Calu3 (cell line): ENCODE measurements at regions of chr21 and their contacts with region 1.

Region 1: GRCh38 chr21:33894736-33895288 is 20.8 kb downstream of the ATP5PO start:
- DNase-seq: peak; percentile 71
- H3K4me3 Mint-ChIP-seq: peak overlapping the region; percentile 62
- H3K27ac Mint-ChIP-seq: peak overlapping the region; percentile 60
- H3K4me1 Mint-ChIP-seq: peaks cover 13% of the 10 kb centered on the region
- H3K27me3 Mint-ChIP-seq: no peaks in the 10 kb centered on the region
- CTCF ChIP-seq: peak; percentile 22

Region 2: DNA sequence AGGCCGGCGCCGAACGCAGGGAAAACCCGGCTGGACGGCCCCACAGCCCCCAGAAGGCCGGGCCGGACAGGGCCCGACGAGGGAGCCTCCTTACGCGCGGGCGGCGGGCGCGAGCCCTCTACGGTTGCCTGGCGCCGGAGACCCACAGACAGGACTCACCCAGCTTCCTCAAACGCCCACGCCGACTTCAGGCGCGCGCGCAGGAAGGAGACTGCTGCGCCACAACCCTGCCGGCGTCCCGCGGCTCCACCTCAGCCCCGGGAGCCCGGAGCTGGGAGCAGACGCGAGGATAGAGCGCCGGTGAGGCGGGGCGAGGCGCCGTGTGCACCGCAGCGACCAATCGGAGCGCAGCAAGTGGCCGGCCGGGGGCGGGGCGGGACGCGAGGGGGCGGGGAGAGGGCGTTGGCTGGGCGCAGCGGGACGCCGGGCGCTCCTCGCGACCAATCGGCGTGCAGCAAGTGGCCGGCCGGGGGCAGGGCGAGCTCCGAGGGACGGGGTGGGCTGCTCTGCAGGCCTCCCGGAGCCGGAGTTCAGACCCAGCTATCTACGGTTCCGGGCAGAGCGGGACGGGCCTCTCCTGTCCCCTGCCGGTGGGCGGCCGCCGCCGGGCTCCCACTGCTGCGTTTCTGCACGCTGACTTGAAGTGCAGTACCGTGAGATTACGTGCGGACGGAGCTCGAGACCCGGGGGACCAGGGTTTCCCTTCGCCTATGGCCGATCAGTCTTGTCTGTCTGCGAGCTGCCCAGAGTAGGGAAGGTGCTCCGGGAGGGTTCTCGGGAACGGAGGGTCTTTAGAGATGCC is 414.9 kb before region 1 on chr21 and contains the start of gene TMEM50B:
- CTCF ChIA-PET with region 1: interaction called, 11 read pairs
- intact Hi-C with region 1: no loop called
- DNase-seq: peak; percentile 91
- H3K4me3 Mint-ChIP-seq: peak within 1 kb of the TSS; percentile 73
- H3K27ac Mint-ChIP-seq: peak within 1 kb of the TSS; percentile 48
- H3K4me1 Mint-ChIP-seq: no peaks in the 10 kb centered on the region
- H3K27me3 Mint-ChIP-seq: no peaks in the 10 kb centered on the region
- CTCF ChIP-seq: no peak
- total RNA-seq, gene TMEM50B: 28.4 and 28.7 TPM in 2 replicates

Region 3: GRCh38 chr21:34017039-34017961 is 122.5 kb after region 1 on chr21:
- CTCF ChIA-PET with region 1: no interaction called
- intact Hi-C with region 1: no loop called
- DNase-seq: no peak
- H3K4me3 Mint-ChIP-seq: no peak overlapping the region
- H3K27ac Mint-ChIP-seq: no peak overlapping the region
- H3K4me1 Mint-ChIP-seq: no peaks in the 10 kb centered on the region
- H3K27me3 Mint-ChIP-seq: no peaks in the 10 kb centered on the region
- CTCF ChIP-seq: no peak

Region 4: DNA sequence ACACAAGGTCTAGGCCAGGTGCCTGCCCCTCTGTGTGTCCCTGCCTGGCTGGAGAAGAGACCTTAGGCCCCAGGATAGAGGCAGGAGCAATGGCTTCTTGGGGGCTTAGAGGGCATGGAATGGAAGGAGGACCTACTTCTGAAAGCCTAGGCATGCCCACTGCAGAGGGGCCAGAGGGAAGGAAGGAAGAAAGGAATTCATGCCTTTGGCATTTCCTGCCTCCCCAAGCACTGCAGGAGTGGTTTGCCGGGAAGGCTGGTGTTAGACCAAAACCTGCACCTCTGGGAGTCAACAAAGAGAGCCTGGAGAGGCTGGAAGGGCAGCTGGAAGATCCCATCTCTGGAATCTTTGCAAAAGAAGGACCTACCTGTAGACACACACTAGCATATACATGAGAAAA is 418.3 kb after region 1 on chr21:
- CTCF ChIA-PET with region 1: no interaction called
- intact Hi-C with region 1: no loop called
- DNase-seq: no peak
- H3K4me3 Mint-ChIP-seq: no peak overlapping the region
- H3K27ac Mint-ChIP-seq: no peak overlapping the region
- H3K4me1 Mint-ChIP-seq: no peaks in the 10 kb centered on the region
- H3K27me3 Mint-ChIP-seq: peaks cover 55% of the 10 kb centered on the region
- CTCF ChIP-seq: no peak